PC-9 (cell line): ENCODE measurements at regions of chr1 and their contacts with region 1.

Region 1: GRCh38 chr1:9890224-9890731 is 19.8 kb downstream of the CTNNBIP1 start:
- DNase-seq: peak; percentile 69 to 89
- H3K4me3 ChIP-seq: no peak overlapping the region
- H3K27ac ChIP-seq: peak overlapping the region; percentile 100
- H3K4me1 ChIP-seq: peaks cover 59% of the 10 kb centered on the region
- H3K27me3 ChIP-seq: no peaks in the 10 kb centered on the region
- CTCF ChIP-seq: no peak

Region 2: DNA sequence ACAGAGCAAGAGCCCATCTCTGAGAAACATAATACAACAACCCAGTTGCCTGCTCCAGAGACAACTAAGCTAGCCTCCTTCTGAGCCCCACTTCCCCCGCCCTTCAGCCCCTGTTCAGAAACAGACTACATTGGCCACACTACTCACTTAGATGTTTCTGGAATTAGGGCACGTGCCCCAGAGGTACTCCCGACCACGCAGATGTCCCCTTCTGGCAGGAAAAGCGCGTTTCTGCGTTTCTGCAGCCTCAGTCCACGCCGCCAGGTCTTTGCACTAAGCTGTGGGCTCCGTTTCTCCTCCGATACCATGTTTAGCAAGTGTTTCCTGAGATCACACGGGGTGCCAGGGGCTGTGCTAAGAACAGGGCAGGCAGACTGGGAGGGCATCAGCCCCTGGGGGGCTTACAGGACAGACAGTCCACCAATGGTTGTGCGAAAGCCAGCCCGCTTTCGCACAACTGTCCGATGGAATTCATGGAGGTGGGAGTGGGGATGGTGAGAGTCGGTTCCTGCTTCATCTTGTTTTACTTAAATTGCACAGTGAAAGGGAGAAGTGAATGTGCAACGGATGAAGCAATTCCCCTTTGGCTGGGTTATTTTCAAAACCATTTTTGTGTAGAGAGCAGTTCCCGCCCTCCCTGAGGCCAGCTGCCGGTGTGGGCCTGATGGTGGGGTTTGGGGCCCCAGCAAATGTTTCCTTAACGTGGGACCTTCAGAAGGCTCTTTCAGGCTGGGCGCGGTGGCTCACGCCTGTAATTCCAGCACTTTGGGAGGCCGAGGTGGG is 236.0 kb before region 1 on chr1:
- CTCF ChIA-PET with region 1: interaction called, 15 read pairs
- POLR2A ChIA-PET with region 1: no interaction called
- intact Hi-C with region 1: no loop called
- DNase-seq: no peak
- H3K4me3 ChIP-seq: no peak overlapping the region
- H3K27ac ChIP-seq: no peak overlapping the region
- H3K4me1 ChIP-seq: 0 out of 2 replicates have a peak, but pooled peaks cover 2% of the 10 kb centered on the region
- H3K27me3 ChIP-seq: peaks cover 5% of the 10 kb centered on the region; the same call in 1 of the 2 replicates
- CTCF ChIP-seq: no peak

Region 3: GRCh38 chr1:9874959-9875635 is 15.2 kb before region 1 on chr1:
- CTCF ChIA-PET with region 1: interaction called, 3 read pairs
- POLR2A ChIA-PET with region 1: interaction called, 10 read pairs
- intact Hi-C with region 1: loop called (anchors 1 kb)
- DNase-seq: peak; percentile 43 to 65
- H3K4me3 ChIP-seq: no peak overlapping the region
- H3K27ac ChIP-seq: no peak overlapping the region
- H3K4me1 ChIP-seq: peaks cover 14% of the 10 kb centered on the region
- H3K27me3 ChIP-seq: no peaks in the 10 kb centered on the region
- CTCF ChIP-seq: peak; percentile 90

Region 4: GRCh38 chr1:9910425-9911178 is 20.3 kb after region 1 on chr1:
- CTCF ChIA-PET with region 1: interaction called, 4 read pairs
- POLR2A ChIA-PET with region 1: interaction called, 4 read pairs
- intact Hi-C with region 1: loop called (anchors 1 kb)
- DNase-seq: peak; percentile 89 to 100
- H3K4me3 ChIP-seq: peak overlapping the region; percentile 58
- H3K27ac ChIP-seq: peak overlapping the region; percentile 64
- H3K4me1 ChIP-seq: peaks cover 12% of the 10 kb centered on the region
- H3K27me3 ChIP-seq: no peaks in the 10 kb centered on the region
- CTCF ChIP-seq: no peak

Region 5: DNA sequence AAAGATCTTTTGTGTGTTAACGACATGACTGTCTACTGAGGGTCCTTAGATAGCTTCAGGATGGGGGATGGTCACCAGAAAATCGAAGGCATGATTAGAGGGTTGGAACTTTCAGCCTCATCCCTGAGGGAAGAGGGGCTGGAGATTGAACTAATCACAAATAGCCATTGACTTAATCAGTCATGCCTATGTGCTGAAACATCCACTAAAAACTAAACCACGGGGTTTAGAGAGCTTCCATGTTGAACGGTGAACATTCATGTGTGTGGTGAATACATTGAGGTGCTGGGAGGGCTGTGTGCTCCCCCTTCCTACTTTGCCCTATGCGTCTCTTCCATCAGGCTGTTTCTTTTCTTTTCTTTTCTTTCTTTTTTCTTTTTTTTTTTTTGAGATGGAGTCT is 123.7 kb after region 1 on chr1:
- CTCF ChIA-PET with region 1: interaction called, 12 read pairs
- POLR2A ChIA-PET with region 1: no interaction called
- intact Hi-C with region 1: no loop called
- DNase-seq: no peak
- H3K4me3 ChIP-seq: no peak overlapping the region
- H3K27ac ChIP-seq: no peak overlapping the region
- H3K4me1 ChIP-seq: peaks cover 8% of the 10 kb centered on the region; the same call in 1 of the 2 replicates
- H3K27me3 ChIP-seq: no peaks in the 10 kb centered on the region
- CTCF ChIP-seq: no peak

Region 6: DNA sequence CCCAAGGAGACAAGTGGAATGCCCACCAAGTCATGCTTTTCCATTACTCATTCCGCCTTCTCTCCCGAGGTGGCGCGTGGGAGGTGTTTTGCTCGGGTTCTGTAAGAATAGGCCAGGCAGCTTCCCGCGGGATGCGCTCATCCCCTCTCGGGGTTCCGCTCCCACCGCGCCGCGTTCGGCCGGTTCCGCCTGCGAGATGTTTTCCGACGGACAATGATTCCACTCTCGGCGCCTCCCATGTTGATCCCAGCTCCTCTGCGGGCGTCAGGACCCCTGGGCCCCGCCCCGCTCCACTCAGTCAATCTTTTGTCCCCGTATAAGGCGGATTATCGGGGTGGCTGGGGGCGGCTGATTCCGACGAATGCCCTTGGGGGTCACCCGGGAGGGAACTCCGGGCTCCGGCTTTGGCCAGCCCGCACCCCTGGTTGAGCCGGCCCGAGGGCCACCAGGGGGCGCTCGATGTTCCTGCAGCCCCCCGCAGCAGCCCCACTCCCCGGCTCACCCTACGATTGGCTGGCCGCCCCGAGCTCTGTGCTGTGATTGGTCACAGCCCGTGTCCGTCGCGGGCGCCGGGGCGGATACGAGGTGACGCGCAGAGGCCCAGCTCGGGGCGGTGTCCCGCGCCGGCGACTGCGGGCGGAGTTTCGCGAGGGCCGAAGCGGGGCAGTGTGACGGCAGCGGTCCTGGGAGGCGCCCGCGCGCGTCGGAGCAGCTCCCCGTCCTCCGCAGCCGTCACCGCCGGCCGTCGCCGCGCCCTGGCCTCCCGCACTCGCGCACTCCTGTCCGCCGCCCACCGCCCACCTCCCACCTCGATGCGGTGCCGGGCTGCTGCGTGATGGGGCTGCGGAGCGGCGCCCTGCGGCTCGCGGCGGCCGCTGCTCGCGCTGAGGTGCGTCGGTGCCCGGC is 319.9 kb after region 1 on chr1 and contains the start of gene KIF1B:
- CTCF ChIA-PET with region 1: no interaction called
- POLR2A ChIA-PET with region 1: interaction called, 12 read pairs
- intact Hi-C with region 1: no loop called
- DNase-seq: peak; percentile 80 to 98
- H3K4me3 ChIP-seq: peak within 1 kb of the TSS; percentile 88
- H3K27ac ChIP-seq: peak within 1 kb of the TSS; percentile 45
- H3K4me1 ChIP-seq: peaks cover 11% of the 10 kb centered on the region
- H3K27me3 ChIP-seq: no peaks in the 10 kb centered on the region
- CTCF ChIP-seq: peak; percentile 88
- total RNA-seq, gene KIF1B: 20.6 and 22.7 TPM in 2 replicates